Esophagus muscularis mucosa (tissue), 4 donors: ENCODE measurements at regions of chr4 and their contacts with region 1.

Region 1: GRCh38 chr4:94451695-94452475 is at the start of gene PDLIM5:
- DNase-seq: peak; percentile 97
- H3K4me3 ChIP-seq: peak within 1 kb of the TSS; percentile 83 to 98 (median 92)
- H3K27ac ChIP-seq: peak within 1 kb of the TSS; percentile 98 to 99 (median 98)
- H3K4me1 ChIP-seq: peaks cover 9 to 49% (median 43%) of the 10 kb centered on the region in 4 donors
- H3K27me3 ChIP-seq: no peaks in the 10 kb centered on the region
- CTCF ChIP-seq: peak in 1 of 3 experiments; percentile 15
- EP300 ChIP-seq: no peak
- POLR2A ChIP-seq: peak; percentile 90
- total RNA-seq, gene PDLIM5: 138 to 160 (median 146) TPM

Region 2: GRCh38 chr4:93710101-93710846 is 741.6 kb before region 1 on chr4:
- intact Hi-C with region 1: no loop called
- DNase-seq: no peak
- H3K4me3 ChIP-seq: no peak overlapping the region
- H3K27ac ChIP-seq: no peak overlapping the region
- H3K4me1 ChIP-seq: no peaks in the 10 kb centered on the region
- H3K27me3 ChIP-seq: no peaks in the 10 kb centered on the region
- CTCF ChIP-seq: no peak
- EP300 ChIP-seq: no peak
- POLR2A ChIP-seq: no peak

Region 3: GRCh38 chr4:94412658-94413038 is 39.2 kb before region 1 on chr4:
- intact Hi-C with region 1: loop called (anchors 5 kb)
- DNase-seq: no peak
- H3K4me3 ChIP-seq: peak overlapping the region; percentile 2 to 8 (median 7)
- H3K27ac ChIP-seq: peak overlapping the region; percentile 46 to 75 (median 68)
- H3K4me1 ChIP-seq: peaks cover 18 to 50% (median 36%) of the 10 kb centered on the region in 4 donors
- H3K27me3 ChIP-seq: no peaks in the 10 kb centered on the region
- CTCF ChIP-seq: no peak
- EP300 ChIP-seq: no peak
- POLR2A ChIP-seq: no peak

Region 4: GRCh38 chr4:94583914-94584641 is 132.2 kb after region 1 on chr4:
- intact Hi-C with region 1: loop called (anchors 5 kb)
- DNase-seq: no peak
- H3K4me3 ChIP-seq: no peak overlapping the region
- H3K27ac ChIP-seq: no peak overlapping the region
- H3K4me1 ChIP-seq: peaks cover 13 to 33% (median 31%) of the 10 kb centered on the region in 4 donors
- H3K27me3 ChIP-seq: no peaks in the 10 kb centered on the region
- CTCF ChIP-seq: no peak
- EP300 ChIP-seq: no peak
- POLR2A ChIP-seq: no peak